ENCODE measurements at regions of chr7 and their contacts with region 1.

Region 1: GRCh38 chr7:77428041-77428473 is 11.9 kb upstream of the GSAP start:
- DNase-seq: peak; percentile 51
- H3K4me3 Mint-ChIP-seq: peak overlapping the region; percentile 35
- H3K27ac Mint-ChIP-seq: peak overlapping the region; percentile 48
- H3K4me1 Mint-ChIP-seq: peaks cover 35% of the 10 kb centered on the region
- H3K27me3 Mint-ChIP-seq: peaks cover 6% of the 10 kb centered on the region

Region 2: DNA sequence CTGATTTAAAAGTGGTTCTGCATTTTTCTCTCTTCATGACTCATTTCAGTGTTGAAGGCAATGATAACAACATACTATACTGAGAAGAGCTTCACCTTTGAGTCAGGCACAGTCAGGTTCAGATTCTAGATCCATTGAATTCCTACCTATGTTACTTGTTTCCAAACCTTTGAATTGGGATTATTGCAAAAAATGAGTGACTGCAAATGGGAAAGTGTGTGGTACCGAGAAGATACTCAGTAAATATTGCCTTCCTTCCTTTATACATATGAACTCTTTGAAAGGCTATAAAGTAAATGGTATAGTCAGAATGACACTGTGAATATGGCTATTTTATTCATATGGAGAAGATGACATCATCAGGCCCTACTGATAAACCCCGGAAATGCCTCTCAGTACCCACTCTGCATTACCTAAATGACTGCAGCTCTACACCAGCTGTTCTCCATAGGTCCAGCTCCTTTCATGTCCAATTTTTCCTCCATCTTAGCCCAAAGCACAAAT is 161.7 kb before region 1 on chr7:
- CTCF ChIA-PET with region 1: no interaction called
- POLR2A ChIA-PET with region 1: no interaction called
- DNase-seq: peak; percentile 25
- H3K4me3 Mint-ChIP-seq: no peak overlapping the region
- H3K27ac Mint-ChIP-seq: peak overlapping the region; percentile 38
- H3K4me1 Mint-ChIP-seq: peaks cover 26% of the 10 kb centered on the region
- H3K27me3 Mint-ChIP-seq: no peaks in the 10 kb centered on the region

Region 3: GRCh38 chr7:77352665-77353406 is 75.2 kb before region 1 on chr7:
- CTCF ChIA-PET with region 1: no interaction called
- POLR2A ChIA-PET with region 1: interaction called, 10 read pairs
- DNase-seq: no peak
- H3K4me3 Mint-ChIP-seq: peak overlapping the region; percentile 23
- H3K27ac Mint-ChIP-seq: peak overlapping the region; percentile 90
- H3K4me1 Mint-ChIP-seq: peaks cover 65% of the 10 kb centered on the region
- H3K27me3 Mint-ChIP-seq: peaks cover 1% of the 10 kb centered on the region

Region 4: DNA sequence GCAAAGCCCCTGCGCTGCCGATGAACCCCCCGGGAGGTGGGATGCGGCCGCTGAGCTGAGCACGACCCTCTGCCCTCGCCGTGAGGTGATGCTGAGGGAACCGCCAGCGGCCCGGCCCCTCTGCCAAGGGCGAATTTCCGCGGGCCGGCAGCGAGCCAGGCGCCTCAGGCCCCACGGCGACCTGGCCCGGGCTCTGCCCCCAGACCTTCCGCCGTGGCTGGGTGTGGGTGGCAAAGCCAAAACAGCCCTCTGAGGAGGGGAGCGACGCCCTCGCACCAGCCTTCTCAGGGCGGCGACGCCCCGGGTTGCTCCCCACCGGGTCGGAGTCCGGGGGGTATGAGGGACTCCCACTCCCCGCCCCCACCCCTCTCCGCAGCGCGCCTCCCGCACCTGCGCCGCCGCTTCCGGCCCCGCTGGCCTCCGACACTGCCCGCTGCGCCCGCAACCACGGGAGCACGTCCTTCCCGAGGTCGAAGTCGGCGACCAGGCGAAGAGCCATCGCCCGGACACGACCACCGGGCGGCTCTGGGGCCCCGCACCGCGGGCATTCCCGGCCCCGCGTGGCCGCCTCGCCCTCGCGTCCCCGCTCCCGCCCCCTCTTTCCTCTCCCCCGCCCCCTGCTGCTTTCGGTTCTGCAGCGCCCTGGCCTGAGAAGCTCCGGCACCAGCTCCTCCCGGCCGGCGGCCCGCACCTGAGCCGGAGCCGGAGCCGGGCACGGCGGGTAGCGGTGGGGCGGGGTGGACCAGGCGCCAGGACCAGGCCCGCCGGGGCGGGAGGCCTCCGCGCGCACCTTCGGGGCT is 12.0 kb before region 1 on chr7 and contains the start of gene GSAP:
- CTCF ChIA-PET with region 1: interaction called, 3 read pairs
- POLR2A ChIA-PET with region 1: interaction called, 30 read pairs
- DNase-seq: peak; percentile 59
- H3K4me3 Mint-ChIP-seq: peak within 1 kb of the TSS; percentile 68
- H3K27ac Mint-ChIP-seq: peak within 1 kb of the TSS; percentile 18
- H3K4me1 Mint-ChIP-seq: peaks cover 30% of the 10 kb centered on the region
- H3K27me3 Mint-ChIP-seq: peaks cover 14% of the 10 kb centered on the region
- total RNA-seq, gene GSAP: 5.9 to 6.6 TPM